ENCODE measurements at regions of chrX and their contacts with region 1.

Region 1: GRCh38 chrX:154370882-154371770 is 3.3 kb downstream of the FLNA start:
- DNase-seq: peak; percentile 70 to 96
- ATAC-seq: peak; percentile 30 to 65
- H3K4me3 ChIP-seq: peak overlapping the region; percentile 98
- H3K27ac ChIP-seq: peak overlapping the region; percentile 98 to 100
- H3K4me1 ChIP-seq: peaks cover 46% of the 10 kb centered on the region
- CTCF ChIP-seq: no peak
- EP300 ChIP-seq: no peak
- POLR2A ChIP-seq: peak; percentile 100
- RAD21 ChIP-seq: no peak

Region 2: GRCh38 chrX:154357197-154357596 is 13.9 kb before region 1 on chrX:
- CTCF ChIA-PET with region 1: interaction called, 19 read pairs
- POLR2A ChIA-PET with region 1: interaction called, 4 read pairs
- DNase-seq: no peak
- ATAC-seq: no peak
- H3K4me3 ChIP-seq: no peak overlapping the region
- H3K27ac ChIP-seq: no peak overlapping the region
- H3K4me1 ChIP-seq: peaks cover 68% of the 10 kb centered on the region
- CTCF ChIP-seq: no peak
- EP300 ChIP-seq: no peak
- POLR2A ChIP-seq: no peak
- RAD21 ChIP-seq: no peak

Region 3: GRCh38 chrX:154397819-154398724 is 26.9 kb after region 1 on chrX and contains the start of gene RPL10:
- CTCF ChIA-PET with region 1: interaction called, 28 read pairs
- POLR2A ChIA-PET with region 1: interaction called, 17 read pairs
- DNase-seq: peak; percentile 96 to 99
- ATAC-seq: peak; percentile 60 to 63
- H3K4me3 ChIP-seq: peak within 1 kb of the TSS; percentile 88
- H3K27ac ChIP-seq: peak within 1 kb of the TSS; percentile 96 to 100
- H3K4me1 ChIP-seq: peaks cover 18% of the 10 kb centered on the region; the same call in 2 of the 3 replicates
- CTCF ChIP-seq: no peak
- EP300 ChIP-seq: no peak
- POLR2A ChIP-seq: peak; percentile 99
- RAD21 ChIP-seq: no peak
- polyA plus RNA-seq, gene RPL10: 3,216 and 3,468 TPM in 2 replicates

Region 4: DNA sequence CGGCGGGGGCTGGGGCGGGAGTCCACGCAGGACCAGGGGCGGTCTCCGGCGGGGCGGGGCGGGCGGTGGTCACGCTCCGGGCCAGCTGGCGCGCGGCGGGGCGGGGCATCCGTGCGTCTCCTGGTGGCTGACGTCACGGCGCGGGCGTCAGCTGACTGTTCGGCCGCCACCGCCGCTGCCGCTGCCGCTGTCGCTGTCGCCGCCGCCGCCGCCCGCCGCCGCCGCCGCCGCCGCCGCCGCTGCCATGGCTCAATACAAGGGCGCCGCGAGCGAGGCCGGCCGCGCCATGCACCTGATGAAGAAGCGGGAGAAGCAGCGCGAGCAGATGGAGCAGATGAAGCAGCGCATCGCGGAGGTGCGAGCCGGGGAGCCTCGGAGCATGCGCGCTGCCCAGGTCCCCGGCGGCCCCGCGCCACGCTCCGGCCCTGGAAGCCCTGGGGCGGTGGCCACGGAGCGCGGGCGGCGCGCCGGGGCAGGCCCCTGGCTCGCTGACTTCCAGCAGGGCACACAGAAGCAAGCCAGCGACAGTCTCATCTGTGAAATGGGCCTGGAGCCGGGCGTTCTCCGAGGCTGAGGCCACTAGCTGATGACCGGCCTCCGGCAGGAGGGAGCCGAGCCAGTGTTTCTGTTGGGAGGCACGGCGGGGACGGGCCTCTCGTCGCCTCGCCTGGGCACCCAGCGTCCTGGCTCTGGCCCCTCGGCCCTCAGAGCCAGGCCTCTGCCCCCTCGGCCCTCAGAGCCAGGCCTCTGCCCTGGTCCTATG is 73.0 kb after region 1 on chrX and contains the start of gene FAM50A:
- CTCF ChIA-PET with region 1: interaction called, 11 read pairs
- POLR2A ChIA-PET with region 1: no interaction called
- DNase-seq: peak; percentile 54 to 79
- ATAC-seq: peak; percentile 79 to 87
- H3K4me3 ChIP-seq: peak within 1 kb of the TSS; percentile 99
- H3K27ac ChIP-seq: peak within 1 kb of the TSS; percentile 92 to 96
- H3K4me1 ChIP-seq: peaks cover 12% of the 10 kb centered on the region
- CTCF ChIP-seq: no peak
- EP300 ChIP-seq: no peak
- POLR2A ChIP-seq: peak; percentile 29; the same call in 1 of the 2 replicates
- RAD21 ChIP-seq: no peak
- polyA plus RNA-seq, gene FAM50A: 55.1 and 57.8 TPM in 2 replicates

Region 5: DNA sequence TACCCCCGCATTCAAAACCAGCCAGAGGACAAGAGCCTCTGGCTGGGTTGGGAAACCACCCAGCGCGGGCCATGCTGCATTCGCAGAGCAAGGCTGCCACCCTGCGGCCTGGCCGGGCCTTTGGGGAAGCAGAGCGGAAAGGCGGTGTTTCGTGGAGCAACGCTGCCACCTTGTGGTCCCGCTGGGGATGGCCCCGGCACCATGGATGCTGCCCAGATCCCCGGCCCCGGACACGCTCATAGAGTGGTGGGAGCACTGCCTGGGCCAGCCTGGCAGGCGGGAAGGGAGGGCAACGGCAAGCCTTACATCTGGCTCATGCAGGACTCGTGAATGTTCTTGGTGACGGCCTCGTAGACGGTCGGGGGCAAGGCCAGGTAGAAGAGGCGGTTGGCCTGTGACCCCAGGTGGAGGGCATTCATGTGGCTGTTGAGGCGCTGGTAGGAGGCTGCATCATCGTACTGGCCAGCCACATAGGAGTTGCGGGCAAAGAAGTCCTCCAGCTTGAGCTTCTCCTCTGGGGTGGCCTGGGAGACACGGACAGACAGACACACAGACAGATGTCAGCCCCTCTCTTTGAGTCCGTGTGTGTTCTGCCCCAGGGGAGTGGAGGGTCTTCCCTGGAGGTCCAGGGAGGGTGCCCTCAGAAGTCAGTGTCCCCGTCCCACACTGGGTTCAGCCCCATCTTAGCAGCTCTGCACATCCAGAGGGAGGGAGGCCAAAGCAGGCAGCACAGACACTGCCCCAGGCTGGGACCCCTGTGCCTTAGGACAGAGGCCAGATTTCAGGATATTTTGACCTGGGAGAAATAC is 163.9 kb after region 1 on chrX:
- CTCF ChIA-PET with region 1: interaction called, 21 read pairs
- POLR2A ChIA-PET with region 1: no interaction called
- DNase-seq: peak; percentile 59 to 89
- ATAC-seq: peak; percentile 62 to 79
- H3K4me3 ChIP-seq: peak overlapping the region; percentile 18; the same call in 1 of the 3 replicates
- H3K27ac ChIP-seq: peak overlapping the region; percentile 98 to 100
- H3K4me1 ChIP-seq: peaks cover 100% of the 10 kb centered on the region
- CTCF ChIP-seq: peak; percentile 88
- EP300 ChIP-seq: no peak
- POLR2A ChIP-seq: no peak
- RAD21 ChIP-seq: peak; percentile 74 to 81

Measured in A549 (cell line).